BJ (cell line): ENCODE measurements at regions of chr20 and their contacts with region 1.

Region 1: GRCh38 chr20:35478804-35479472 is 23.5 kb downstream of the CEP250 start:
- DNase-seq: no peak
- H3K4me3 ChIP-seq: no peak overlapping the region
- H3K27me3 ChIP-seq: no peaks in the 10 kb centered on the region
- CTCF ChIP-seq: no peak

Region 2: GRCh38 chr20:35297155-35297554 is 181.8 kb before region 1 on chr20:
- CTCF ChIA-PET with region 1: no interaction called
- POLR2A ChIA-PET with region 1: no interaction called
- DNase-seq: no peak
- H3K4me3 ChIP-seq: no peak overlapping the region
- H3K27me3 ChIP-seq: peaks cover 4% of the 10 kb centered on the region
- CTCF ChIP-seq: no peak

Region 3: GRCh38 chr20:35463455-35464300 is 15.3 kb before region 1 on chr20:
- CTCF ChIA-PET with region 1: interaction called, 24 read pairs
- POLR2A ChIA-PET with region 1: no interaction called
- DNase-seq: no peak
- H3K4me3 ChIP-seq: no peak overlapping the region
- H3K27me3 ChIP-seq: no peaks in the 10 kb centered on the region
- CTCF ChIP-seq: peak; percentile 75

Region 4: DNA sequence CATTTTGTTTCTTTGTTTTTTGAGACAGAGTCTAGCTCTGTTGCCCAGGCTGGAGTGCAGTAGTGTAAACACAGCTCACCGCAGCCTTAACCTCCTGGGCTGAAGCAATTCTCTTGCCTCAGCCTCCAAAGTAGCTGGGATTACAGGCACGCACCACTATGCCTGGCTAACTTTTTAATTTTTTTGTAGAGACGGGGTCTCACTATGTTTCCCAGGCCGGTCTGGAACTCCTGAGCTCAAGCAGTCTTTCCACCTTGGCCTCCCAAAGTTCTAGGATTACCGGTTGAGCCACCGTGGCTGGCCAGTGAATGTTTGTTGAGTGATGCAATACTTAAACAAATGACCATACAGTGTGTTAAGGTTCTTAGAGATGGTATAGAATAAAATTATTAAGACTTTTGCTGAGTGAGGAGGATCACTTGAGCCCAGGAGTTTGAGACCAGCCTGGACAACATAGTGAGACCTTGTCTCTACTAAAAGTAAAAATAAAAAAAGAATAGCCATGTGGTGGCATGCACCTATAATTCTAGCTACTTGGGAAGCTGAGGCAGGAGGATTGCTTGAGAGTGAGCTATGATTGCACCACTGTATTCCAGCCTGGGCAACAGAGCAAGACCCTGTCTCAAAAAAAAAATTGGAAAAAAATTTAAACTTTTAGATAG is 10.1 kb before region 1 on chr20:
- CTCF ChIA-PET with region 1: interaction called, 24 read pairs
- POLR2A ChIA-PET with region 1: no interaction called
- DNase-seq: no peak
- H3K4me3 ChIP-seq: no peak overlapping the region
- H3K27me3 ChIP-seq: no peaks in the 10 kb centered on the region
- CTCF ChIP-seq: no peak

Region 5: GRCh38 chr20:35690265-35690664 is 211.3 kb after region 1 on chr20:
- CTCF ChIA-PET with region 1: no interaction called
- POLR2A ChIA-PET with region 1: interaction called, 10 read pairs
- DNase-seq: no peak
- H3K4me3 ChIP-seq: no peak overlapping the region
- H3K27me3 ChIP-seq: no peaks in the 10 kb centered on the region
- CTCF ChIP-seq: no peak